ENCODE measurements at regions of chr1 and their contacts with region 1.

Region 1: DNA sequence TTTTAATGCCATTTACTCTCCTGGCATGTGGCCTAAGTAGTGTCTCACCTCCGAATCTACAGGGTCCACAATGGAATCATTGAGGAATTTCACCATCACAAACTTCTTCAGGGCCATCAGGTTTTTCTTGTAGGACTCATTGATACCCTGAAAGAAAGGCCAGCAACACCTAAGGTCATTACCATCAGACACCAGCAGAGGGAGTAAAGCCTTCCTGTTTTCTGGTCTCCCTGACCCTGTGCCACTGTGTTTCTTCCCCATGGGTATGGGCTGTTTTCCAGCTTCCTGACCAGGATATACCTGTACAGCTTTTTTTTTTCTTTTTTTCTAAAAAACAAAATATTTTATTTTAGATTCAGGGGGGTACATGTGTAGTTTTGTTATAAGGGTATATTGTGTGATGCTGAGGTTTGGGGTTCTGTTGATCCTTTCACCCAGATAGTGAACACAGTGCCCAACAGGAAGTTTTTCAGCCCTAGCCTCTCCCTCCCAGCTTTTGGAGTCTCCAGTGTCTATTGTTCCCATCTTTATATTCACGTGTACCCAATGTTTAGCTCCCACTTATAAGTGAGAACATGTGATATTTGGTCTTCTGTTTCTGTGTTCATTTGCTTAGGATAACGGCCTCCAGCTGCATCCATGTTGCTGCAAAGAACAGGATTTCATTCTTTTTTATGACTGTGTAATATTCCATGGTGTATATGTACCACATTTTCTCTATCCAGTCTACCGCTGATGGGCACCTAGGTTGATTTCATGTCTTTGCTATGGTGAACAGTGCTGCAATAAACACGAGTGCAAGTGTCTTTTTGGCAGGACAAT is 18.3 kb downstream of the PPT1 start:
- DNase-seq: peak in 1 of 2 experiments; percentile 79
- H3K4me3 ChIP-seq: no peak overlapping the region
- H3K27ac ChIP-seq: no peak overlapping the region
- H3K4me1 ChIP-seq: no peaks in the 10 kb centered on the region
- H3K27me3 ChIP-seq: no peaks in the 10 kb centered on the region
- CTCF ChIP-seq: peak; percentile 42 to 80 (median 66)
- EP300 ChIP-seq: no peak
- POLR2A ChIP-seq: no peak
- RAD21 ChIP-seq: peak; percentile 69 to 74

Region 2: DNA sequence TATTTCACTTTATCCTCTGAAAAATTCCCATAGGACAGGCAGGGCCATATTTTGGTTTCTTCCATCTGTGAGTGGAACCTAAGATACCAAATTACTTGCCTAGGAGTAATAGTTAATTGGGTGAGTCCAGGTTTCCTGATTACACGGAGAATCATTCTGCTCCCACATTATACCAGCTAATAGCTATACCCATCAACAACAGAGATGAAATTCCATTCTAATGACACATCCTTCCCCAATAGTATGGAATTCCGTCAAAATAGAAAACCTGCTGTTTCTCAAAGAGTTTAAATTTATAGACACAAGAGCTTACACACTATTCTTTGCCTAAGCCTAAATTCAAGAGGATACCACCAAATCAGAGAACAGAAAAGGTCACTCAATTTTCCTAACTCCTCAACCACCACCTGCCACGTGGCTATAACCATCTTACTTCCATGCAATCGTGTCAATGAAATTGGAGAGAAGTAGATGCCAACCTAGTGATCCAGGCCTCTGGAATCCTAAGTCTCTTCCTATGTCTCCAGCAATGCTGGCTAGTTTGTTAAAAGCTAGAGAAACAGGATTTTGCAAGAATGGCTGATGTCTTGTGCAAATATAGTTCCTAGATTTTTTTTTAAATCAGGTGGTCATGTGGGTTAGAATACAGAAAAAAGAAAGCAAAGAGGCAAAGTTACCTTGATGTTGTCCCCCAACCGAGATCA is 12.1 kb after region 1 on chr1:
- CTCF ChIA-PET with region 1: interaction called, 18 read pairs
- POLR2A ChIA-PET with region 1: interaction called, 5 read pairs
- DNase-seq: no peak
- H3K4me3 ChIP-seq: no peak overlapping the region
- H3K27ac ChIP-seq: no peak overlapping the region
- H3K4me1 ChIP-seq: no peaks in the 10 kb centered on the region
- H3K27me3 ChIP-seq: no peaks in the 10 kb centered on the region
- CTCF ChIP-seq: no peak
- EP300 ChIP-seq: no peak
- POLR2A ChIP-seq: no peak
- RAD21 ChIP-seq: no peak

Measured in H1 (cell line).